Ovary (tissue), 10 donors: ENCODE measurements at regions of chr1 and their contacts with region 1.

Region 1: DNA sequence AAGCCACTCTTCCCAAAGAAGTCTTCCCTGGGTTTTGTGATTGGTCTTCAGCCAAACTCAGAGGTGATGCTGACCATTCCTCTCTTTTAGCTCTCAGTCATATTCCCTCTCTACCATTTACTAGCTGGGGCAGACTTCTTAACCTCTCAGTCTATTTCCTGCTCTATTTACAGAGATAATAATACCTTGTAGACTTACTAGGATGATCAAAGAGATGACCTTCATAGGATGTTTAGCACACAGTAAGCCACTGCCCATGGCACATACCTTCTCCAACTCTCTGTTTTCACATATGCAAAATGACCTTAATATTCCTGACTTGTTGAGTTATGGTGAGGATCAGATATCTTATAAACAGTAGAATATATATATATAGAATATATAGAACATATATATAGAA is 106.2 kb upstream of the L1TD1 start:
- DNase-seq: no peak
- H3K4me3 ChIP-seq: no peak overlapping the region
- H3K27ac ChIP-seq: no peak overlapping the region
- H3K4me1 ChIP-seq: peaks cover 3% of the 10 kb centered on the region
- H3K27me3 ChIP-seq: no peaks in the 10 kb centered on the region
- CTCF ChIP-seq: no peak
- EP300 ChIP-seq: no peak
- POLR2A ChIP-seq: no peak

Region 2: GRCh38 chr1:61851849-61852669 is 236.4 kb before region 1 on chr1:
- intact Hi-C with region 1: no loop called
- DNase-seq: no peak
- H3K4me3 ChIP-seq: no peak overlapping the region
- H3K27ac ChIP-seq: no peak overlapping the region
- H3K4me1 ChIP-seq: no peaks in the 10 kb centered on the region
- H3K27me3 ChIP-seq: no peaks in the 10 kb centered on the region
- CTCF ChIP-seq: peak; percentile 49 to 66 (median 51)
- EP300 ChIP-seq: no peak
- POLR2A ChIP-seq: no peak

Region 3: GRCh38 chr1:62131093-62131725 is 42.8 kb after region 1 on chr1:
- intact Hi-C with region 1: loop called in 1 of 4 experiments (anchors 5 kb)
- DNase-seq: peak in 3 of 5 donors; percentile 20 to 40 (median 30)
- H3K4me3 ChIP-seq: no peak overlapping the region
- H3K27ac ChIP-seq: no peak overlapping the region
- H3K4me1 ChIP-seq: no peaks in the 10 kb centered on the region
- H3K27me3 ChIP-seq: no peaks in the 10 kb centered on the region
- CTCF ChIP-seq: peak in 2 of 3 donors; percentile 28 to 50
- EP300 ChIP-seq: no peak
- POLR2A ChIP-seq: no peak